PC-3 (cell line): ENCODE measurements at regions of chr3 and their contacts with region 1.

Region 1: GRCh38 chr3:150603153-150603979 is at the start of gene SELENOT:
- DNase-seq: peak; percentile 97
- ATAC-seq: peak; percentile 69
- H3K4me3 ChIP-seq: peak within 1 kb of the TSS; percentile 94
- H3K27ac ChIP-seq: peak within 1 kb of the TSS; percentile 85
- H3K4me1 ChIP-seq: peaks cover 42% of the 10 kb centered on the region
- H3K27me3 ChIP-seq: no peaks in the 10 kb centered on the region
- CTCF ChIP-seq: peak; percentile 40
- total RNA-seq, gene SELENOT: 109 and 119 TPM in 2 replicates

Region 2: GRCh38 chr3:150546226-150547044 is 56.9 kb before region 1 on chr3 and contains the starts of genes EIF2A and SERP1:
- CTCF ChIA-PET with region 1: no interaction called
- POLR2A ChIA-PET with region 1: no interaction called
- intact Hi-C with region 1: loop called (anchors 2 kb)
- DNase-seq: peak; percentile 100
- ATAC-seq: peak; percentile 90
- H3K4me3 ChIP-seq: peak within 1 kb of the TSS; percentile 77
- H3K27ac ChIP-seq: peak within 1 kb of the TSS; percentile 83
- H3K4me1 ChIP-seq: peaks cover 33% of the 10 kb centered on the region
- H3K27me3 ChIP-seq: no peaks in the 10 kb centered on the region
- CTCF ChIP-seq: no peak
- total RNA-seq, gene EIF2A: 67.9 and 92.4 TPM in 2 replicates
- total RNA-seq, gene SERP1: 439 and 552 TPM in 2 replicates

Region 3: DNA sequence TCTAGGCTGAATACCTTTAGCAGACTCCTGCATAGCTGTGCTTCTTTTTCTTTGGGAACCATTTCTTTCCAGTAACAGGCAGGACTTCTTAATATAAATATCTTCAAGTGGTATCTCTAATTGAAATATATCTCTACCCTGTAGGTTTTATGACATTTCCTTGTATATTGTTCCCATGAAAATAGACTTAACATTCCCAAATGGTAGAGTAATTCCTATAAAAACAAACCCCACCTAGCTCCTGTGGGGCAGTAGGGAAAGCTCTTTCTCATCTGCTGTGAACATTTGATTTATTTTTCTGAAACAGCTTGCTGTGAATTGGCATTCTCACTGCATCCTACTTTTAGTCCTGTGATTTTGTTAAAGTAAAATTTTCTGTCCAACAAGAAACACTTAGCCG is 20.6 kb after region 1 on chr3:
- CTCF ChIA-PET with region 1: no interaction called
- POLR2A ChIA-PET with region 1: no interaction called
- intact Hi-C with region 1: loop called (anchors 2 kb)
- DNase-seq: peak; percentile 10
- ATAC-seq: peak; percentile 58
- H3K4me3 ChIP-seq: no peak overlapping the region
- H3K27ac ChIP-seq: no peak overlapping the region; the same call in 1 of the 2 replicates
- H3K4me1 ChIP-seq: peaks cover 7% of the 10 kb centered on the region
- H3K27me3 ChIP-seq: no peaks in the 10 kb centered on the region
- CTCF ChIP-seq: no peak